Heart left ventricle (tissue), 16 donors: ENCODE measurements at regions of chr20 and their contacts with region 1.

Region 1: DNA sequence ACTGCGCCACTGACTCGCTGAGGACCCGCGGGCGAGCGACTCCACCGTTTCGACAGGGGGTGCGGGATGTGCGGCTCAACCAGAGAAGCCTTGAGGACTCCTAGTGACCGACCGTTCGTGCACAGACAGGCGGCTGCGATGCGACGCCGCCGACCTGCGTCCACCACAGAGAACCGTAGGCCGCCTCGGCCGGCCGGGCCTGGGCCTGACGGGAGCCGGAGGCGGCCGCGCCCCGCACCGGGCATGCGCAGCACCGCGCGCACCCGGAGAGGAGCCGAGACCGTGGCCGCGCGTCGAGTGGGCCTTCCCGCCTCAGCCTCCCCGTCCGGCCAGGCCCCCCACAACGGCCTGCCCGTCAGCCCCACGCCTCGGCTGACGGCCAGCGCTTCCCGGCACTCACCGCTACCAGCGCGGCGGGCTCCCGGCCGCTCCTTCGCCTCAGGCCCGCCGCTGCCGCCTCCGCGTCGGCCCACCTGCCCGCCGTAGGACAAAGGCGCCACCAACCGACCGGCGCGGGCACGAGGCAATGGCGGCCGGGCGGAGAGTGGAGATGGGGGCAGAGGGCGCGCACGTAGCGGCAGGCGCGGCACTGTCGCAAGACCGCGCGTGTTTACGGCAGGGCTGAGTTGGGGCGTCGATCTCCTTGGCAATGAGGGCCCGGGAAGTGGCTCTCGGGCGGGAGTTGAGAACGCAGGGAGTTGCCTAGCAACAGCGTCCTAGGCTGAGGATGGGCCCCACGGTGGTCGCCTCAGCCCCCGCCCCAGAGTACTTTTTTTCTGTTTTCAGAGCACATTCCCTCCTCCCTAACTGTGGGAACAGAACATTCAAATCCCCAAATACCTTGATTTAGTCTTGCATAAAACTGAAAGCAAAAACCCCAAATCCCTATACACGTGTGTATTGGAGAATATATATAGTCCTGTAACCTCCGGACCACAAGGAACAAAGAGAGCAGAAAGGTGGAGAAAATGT is at the start of gene NCOA5:
- DNase-seq: peak; percentile 96 to 98 (median 97)
- ATAC-seq: peak; percentile 96 to 98 (median 98)
- H3K4me3 ChIP-seq: peak within 1 kb of the TSS; percentile 52 to 96 (median 86)
- H3K27ac ChIP-seq: peak within 1 kb of the TSS; percentile 94 to 100 (median 98)
- H3K4me1 ChIP-seq: peaks cover 6 to 50% (median 46%) of the 10 kb centered on the region in 12 donors
- H3K27me3 ChIP-seq: no peaks in the 10 kb centered on the region
- CTCF ChIP-seq: peak in 7 of 12 donors; percentile 11 to 56 (median 41)
- POLR2A ChIP-seq: peak in 1 of 2 donors; percentile 70
- total RNA-seq, gene NCOA5: 9.5 to 17.4 (median 12.5) TPM

Region 2: DNA sequence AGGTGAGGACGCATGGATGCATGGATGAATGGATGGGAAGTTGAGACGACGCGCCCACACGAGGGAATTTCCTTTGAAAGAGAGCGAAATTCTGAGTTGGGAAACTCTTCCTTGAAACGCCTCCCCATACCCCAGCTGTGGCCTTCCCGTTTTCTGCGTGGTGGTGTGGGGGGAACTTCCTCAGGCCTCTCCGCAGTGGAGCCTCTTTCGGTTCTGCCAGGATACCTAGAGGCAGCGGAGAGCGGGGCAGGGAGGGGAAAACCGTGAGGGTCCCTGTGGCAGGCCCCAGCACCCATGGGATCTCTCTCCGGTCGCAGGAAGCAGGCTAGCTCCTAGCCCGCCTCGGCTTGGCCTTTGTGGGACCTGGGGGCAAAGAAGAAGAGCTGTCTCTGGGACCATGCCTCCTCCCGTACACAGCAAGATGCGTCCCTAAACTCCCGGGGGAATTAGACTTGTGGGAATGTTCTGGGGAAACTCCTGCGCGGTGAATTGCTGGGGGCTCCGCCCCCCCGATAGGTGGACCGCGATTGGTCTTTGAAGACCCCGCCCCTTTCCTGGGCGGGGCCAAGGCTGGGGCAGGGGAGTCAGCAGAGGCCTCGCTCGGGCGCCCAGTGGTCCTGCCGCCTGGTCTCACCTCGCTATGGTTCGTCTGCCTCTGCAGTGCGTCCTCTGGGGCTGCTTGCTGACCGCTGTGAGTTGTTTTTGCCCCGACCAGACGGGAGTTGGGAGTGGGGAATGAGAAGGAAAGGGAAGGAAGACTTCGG is 28.2 kb after region 1 on chr20 and contains the start of gene CD40:
- intact Hi-C with region 1: loop called in 2 of 10 experiments (anchors 1 to 2 kb)
- DNase-seq: peak; percentile 90 to 95 (median 92)
- ATAC-seq: peak; percentile 91 to 99 (median 97)
- H3K4me3 ChIP-seq: peak within 1 kb of the TSS; percentile 45 to 75 (median 61)
- H3K27ac ChIP-seq: peak within 1 kb of the TSS; percentile 73 to 95 (median 83)
- H3K4me1 ChIP-seq: peaks cover 0 to 57% (median 30%) of the 10 kb centered on the region in 12 donors
- H3K27me3 ChIP-seq: no peaks in the 10 kb centered on the region
- CTCF ChIP-seq: no peak
- POLR2A ChIP-seq: peak in 1 of 2 donors; percentile 55
- total RNA-seq, gene CD40: 3.5 to 38.3 (median 5.7) TPM